Breast epithelium (tissue), 4 donors: ENCODE measurements at regions of chrX and their contacts with region 1.

Region 1: DNA sequence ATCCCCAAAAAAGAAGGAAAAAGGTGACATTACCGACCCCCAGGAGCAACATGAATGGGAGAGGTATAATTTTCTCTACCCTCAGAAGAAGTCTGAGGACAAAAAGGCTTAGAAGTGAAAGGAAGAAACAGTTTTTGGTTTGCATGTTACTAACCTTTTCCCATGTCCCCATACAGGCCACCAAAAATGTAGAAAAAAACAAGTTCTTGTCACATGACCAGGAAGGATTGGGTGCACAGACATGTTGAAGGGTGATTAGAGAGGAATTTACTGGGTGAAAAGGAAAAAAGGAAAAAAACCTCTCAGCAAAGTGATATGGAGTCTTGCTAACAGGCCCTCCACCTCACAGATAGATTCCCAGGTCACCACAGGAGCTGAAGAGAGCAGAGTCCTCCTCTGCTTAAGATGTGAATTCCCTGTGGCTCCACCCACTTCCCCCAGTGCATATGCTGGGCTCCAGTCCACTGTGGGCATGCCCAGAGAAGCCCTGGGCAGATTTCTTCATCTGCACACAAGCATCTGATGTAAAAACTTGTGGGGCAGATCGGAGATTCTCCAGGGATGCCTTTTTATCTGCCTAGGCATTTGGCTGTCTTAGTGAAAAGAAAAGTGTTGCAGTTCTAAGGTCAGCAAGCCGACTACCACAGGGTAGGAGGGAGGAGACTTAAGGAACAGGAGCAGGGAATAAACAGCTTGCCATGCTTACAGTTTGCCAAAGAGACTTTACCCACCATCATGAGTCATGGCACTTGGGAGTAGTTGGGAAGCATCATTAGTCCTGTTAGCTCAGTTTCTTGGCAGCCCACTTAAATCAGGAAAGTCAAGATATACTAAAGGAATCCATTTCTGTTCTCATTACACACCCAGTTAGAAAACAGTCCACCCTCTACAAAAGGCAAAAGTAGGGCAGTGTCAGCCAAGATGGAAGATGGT is 25.0 kb upstream of the PASD1 start:
- DNase-seq: no peak
- H3K4me3 ChIP-seq: no peak overlapping the region
- H3K27ac ChIP-seq: no peak overlapping the region
- H3K4me1 ChIP-seq: no peaks in the 10 kb centered on the region
- H3K27me3 ChIP-seq: peaks cover 0 to 5% of the 10 kb centered on the region in 2 donors
- CTCF ChIP-seq: no peak
- POLR2A ChIP-seq: no peak

Region 2: GRCh38 chrX:150429594-150429993 is 1108.9 kb before region 1 on chrX:
- intact Hi-C with region 1: loop called (anchors 5 kb)
- DNase-seq: no peak
- H3K4me3 ChIP-seq: no peak overlapping the region
- H3K27ac ChIP-seq: no peak overlapping the region
- H3K4me1 ChIP-seq: no peaks in the 10 kb centered on the region
- H3K27me3 ChIP-seq: no peaks in the 10 kb centered on the region
- CTCF ChIP-seq: no peak
- POLR2A ChIP-seq: no peak

Region 3: GRCh38 chrX:151912265-151912664 is 373.8 kb after region 1 on chrX:
- intact Hi-C with region 1: no loop called
- DNase-seq: no peak
- H3K4me3 ChIP-seq: no peak overlapping the region
- H3K27ac ChIP-seq: no peak overlapping the region
- H3K4me1 ChIP-seq: no peaks in the 10 kb centered on the region
- H3K27me3 ChIP-seq: no peaks in the 10 kb centered on the region
- CTCF ChIP-seq: no peak
- POLR2A ChIP-seq: no peak